Right ventricle myocardium superior (tissue), 1 donor: ENCODE measurements at regions of chr15 and their contacts with region 1.

Region 1: DNA sequence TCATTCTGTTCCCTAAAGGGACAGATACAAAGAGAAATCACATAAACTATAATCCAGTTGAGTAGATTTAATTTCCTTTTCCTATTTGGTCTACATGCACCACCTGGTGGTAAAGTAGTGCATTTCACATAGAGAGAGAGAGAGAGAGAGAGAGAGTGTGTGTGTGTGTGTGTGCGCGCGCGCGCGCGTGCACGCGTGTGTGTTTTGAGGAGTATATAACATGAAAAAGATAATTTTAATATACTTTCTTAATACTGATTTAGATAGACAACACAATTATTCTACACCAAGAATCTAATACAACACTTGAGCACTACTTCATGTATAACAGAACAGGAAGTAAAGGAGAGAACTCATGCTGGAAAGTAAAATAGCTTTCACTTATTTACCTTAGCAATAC is 1.1 kb upstream of the FGF7 start:
- DNase-seq: peak; percentile 78
- ATAC-seq: peak; percentile 63

Region 2: DNA sequence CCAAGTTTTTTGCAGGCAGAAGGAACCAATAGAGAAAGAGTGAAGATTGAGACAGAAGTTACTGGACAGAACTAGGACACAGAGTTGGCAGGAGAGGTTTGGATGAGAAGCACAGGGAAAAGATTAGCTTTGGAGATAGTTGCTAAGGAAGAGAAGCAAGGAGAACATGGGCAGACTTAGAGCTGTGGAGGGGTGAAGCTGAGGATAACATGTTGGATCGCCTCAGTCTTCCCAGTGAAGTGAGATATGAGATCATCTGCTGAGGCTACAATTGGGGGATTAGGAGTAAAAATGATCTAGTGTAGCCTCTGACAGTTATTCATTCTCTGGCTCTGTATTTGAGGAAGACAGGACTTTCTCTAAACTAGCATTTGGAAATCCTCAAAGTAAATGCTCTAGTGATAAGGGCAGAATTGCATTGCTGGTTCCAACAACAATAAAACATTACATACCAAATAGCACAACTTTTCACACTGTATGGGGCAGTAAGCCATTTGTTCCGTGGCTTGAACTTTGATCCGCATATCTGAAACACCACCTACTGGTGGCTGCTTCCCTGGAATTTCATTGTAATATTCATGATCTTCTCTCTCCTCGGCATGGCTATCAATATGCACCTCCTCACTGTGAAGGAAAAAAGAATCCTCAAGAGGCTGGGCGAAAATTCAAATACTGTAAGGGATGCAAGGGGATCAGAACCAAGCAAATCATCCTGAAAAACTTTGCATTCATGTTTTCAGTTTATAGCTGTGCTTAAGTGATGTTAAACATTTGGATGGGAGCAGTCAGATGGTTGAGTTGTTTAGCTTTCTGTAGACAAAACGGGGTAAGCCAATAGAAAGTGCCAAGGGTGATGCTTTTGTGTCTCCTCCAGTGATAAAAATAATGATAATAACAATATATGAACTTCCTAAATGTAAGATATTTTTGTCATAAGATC is 566.2 kb before region 1 on chr15:
- intact Hi-C with region 1: loop called (anchors 10 kb)
- DNase-seq: no peak
- ATAC-seq: peak; percentile 84

Region 3: DNA sequence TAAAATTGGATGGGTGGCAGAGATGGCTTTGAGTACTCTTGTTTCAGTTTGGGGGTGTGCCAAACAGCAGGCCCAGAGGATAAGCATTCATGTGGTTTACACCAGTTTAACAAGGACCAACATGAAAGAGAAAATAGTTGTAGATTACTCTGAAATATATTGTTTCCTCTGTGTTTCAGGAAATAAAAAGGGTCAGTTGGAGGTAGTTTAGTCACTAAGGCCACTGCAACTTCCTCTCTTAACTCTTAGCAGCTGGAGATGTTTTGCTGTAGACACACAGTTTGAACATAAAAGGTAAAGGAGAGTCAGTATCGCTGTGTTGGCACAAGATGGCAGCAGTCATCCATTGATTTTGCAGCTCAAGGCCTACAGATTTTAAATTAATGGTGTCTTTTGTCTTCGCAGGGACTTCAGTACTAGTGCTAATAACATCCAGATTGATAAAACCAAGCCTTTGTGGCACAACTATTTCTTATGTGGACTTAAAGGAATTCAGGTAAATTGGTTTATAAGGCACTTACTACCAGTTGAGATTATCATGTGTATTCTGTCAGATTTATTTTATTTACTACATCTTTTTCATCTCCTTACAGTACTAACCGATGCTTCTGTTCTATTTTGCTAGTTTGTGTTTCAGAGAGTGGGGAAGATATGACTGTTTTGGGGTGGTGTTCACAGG is 186.4 kb before region 1 on chr15:
- intact Hi-C with region 1: loop called (anchors 5 kb)
- DNase-seq: no peak
- ATAC-seq: peak; percentile 89

Region 4: GRCh38 chr15:49383266-49383665 is 38.7 kb before region 1 on chr15:
- intact Hi-C with region 1: no loop called
- DNase-seq: no peak
- ATAC-seq: no peak

Region 5: GRCh38 chr15:49492824-49493223 is 70.8 kb after region 1 on chr15:
- intact Hi-C with region 1: no loop called
- DNase-seq: no peak
- ATAC-seq: no peak